ENCODE measurements at regions of chr22 and their contacts with region 1.

Region 1: GRCh38 chr22:42754658-42755057 is 34.0 kb upstream of the A4GALT start:
- DNase-seq: no peak

Region 2: GRCh38 chr22:42688241-42689211 is 66.1 kb before region 1 on chr22:
- intact Hi-C with region 1: loop called in 1 of 2 experiments (anchors 5 kb)
- DNase-seq: peak; percentile 95